ENCODE measurements at regions of chr12 and their contacts with region 1.

Region 1: GRCh38 chr12:124767066-124767821 is 96.4 kb downstream of the SCARB1 start:
- DNase-seq: peak; percentile 80 to 87
- ATAC-seq: peak; percentile 68 to 89 (median 83)
- H3K4me3 ChIP-seq: no peak overlapping the region
- H3K27ac ChIP-seq: peak overlapping the region in 7 of 10 donors; percentile 66 to 87 (median 81)
- H3K4me1 ChIP-seq: peaks cover 6 to 55% (median 38%) of the 10 kb centered on the region in 9 donors
- H3K27me3 ChIP-seq: peaks cover 0 to 4% (median 0%) of the 10 kb centered on the region in 7 donors
- CTCF ChIP-seq: peak; percentile 98 to 100 (median 100)

Region 2: DNA sequence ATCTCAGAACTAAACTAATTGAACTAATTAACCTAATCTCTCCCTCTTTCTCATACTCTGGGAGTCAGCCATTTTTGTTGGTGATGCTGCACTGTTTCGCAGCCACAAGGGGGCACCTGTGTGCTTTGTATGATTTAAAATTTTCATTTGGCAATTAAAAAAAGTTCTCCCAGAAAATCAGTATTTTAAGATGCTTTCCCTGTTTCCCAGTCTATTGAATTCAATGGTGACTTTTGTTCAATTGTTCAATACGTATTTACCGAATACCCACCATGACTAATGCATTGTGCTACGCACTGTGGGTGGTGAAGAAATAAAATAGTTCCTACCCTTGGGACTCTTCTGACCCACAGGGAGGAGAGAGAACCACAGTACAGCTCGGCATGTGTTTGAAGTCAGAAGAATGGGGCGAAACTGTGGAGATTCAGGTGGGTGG is 730.6 kb before region 1 on chr12:
- intact Hi-C with region 1: loop called in 9 of 10 experiments (anchors 1 to 5 kb)
- DNase-seq: peak; percentile 23 to 33
- ATAC-seq: peak in 4 of 8 donors; percentile 44 to 61 (median 54)
- H3K4me3 ChIP-seq: no peak overlapping the region
- H3K27ac ChIP-seq: no peak overlapping the region
- H3K4me1 ChIP-seq: peaks cover 0 to 19% (median 0%) of the 10 kb centered on the region in 9 donors
- H3K27me3 ChIP-seq: no peaks in the 10 kb centered on the region
- CTCF ChIP-seq: peak; percentile 86 to 97 (median 95)

Region 3: GRCh38 chr12:124347716-124348357 is 419.4 kb before region 1 on chr12:
- intact Hi-C with region 1: loop called in 5 of 10 experiments (anchors 5 to 10 kb)
- DNase-seq: no peak
- ATAC-seq: peak in 3 of 8 donors; percentile 4 to 25 (median 13)
- H3K4me3 ChIP-seq: no peak overlapping the region
- H3K27ac ChIP-seq: no peak overlapping the region
- H3K4me1 ChIP-seq: peaks cover 0 to 12% (median 7%) of the 10 kb centered on the region in 9 donors
- H3K27me3 ChIP-seq: no peaks in the 10 kb centered on the region
- CTCF ChIP-seq: peak; percentile 22 to 60 (median 52)

Region 4: DNA sequence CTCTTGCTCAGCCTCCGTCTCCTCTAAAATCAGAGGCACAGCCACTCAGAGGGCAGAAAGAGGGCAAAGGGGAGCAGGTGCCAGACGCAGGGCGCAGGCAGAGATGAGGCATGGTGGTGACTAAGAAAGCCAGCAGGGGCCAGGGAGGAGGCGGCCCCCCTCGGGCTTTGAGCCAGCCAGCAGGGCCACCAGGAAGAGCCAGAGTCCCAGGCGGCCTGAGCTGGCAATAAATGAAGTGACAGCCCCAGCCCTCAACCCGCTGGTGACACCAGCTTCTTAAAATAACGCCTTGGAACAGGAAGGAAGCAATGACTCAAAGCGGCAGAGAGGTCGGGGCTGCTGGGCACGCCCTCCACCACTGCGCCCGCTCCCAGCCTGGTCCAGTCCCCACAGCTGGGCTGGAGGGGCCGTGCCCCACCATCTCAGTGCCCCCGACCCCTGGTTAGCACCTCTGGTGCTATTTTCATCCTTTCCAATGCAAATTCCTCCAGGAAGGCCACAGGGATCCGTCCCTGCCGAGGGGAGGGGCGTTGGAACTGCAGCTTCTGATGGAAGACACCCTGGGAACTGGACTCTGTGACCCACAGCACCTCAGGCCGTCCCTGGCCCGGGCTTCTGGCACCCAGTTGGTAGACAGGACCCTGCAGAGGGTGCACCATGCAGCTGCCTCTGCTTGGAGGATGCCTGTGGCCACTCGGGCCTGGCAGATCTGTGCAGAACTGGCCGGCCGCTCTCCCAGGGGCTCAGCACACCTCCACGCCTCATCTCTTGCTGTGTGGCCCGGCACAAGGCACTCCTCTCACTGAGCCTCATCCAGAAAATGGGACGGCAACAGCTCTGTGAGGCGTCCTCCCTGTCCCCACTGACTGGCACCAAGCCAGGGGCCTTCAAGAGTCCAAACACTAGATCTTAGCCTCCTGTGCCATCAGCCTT is 313.6 kb before region 1 on chr12:
- intact Hi-C with region 1: loop called in 1 of 10 experiments (anchors 10 kb)
- DNase-seq: peak; percentile 90 to 93
- ATAC-seq: peak; percentile 76 to 88 (median 84)
- H3K4me3 ChIP-seq: peak overlapping the region in 6 of 10 donors; percentile 16 to 31 (median 25)
- H3K27ac ChIP-seq: peak overlapping the region; percentile 61 to 95 (median 88)
- H3K4me1 ChIP-seq: peaks cover 34 to 77% (median 72%) of the 10 kb centered on the region in 9 donors
- H3K27me3 ChIP-seq: no peaks in the 10 kb centered on the region
- CTCF ChIP-seq: peak in 4 of 9 donors; percentile 10 to 39 (median 29)

Region 5: GRCh38 chr12:124567661-124568373 is 199.4 kb before region 1 on chr12:
- intact Hi-C with region 1: loop called (anchors 2 to 10 kb)
- DNase-seq: peak; percentile 96 to 97
- ATAC-seq: peak; percentile 83 to 92 (median 88)
- H3K4me3 ChIP-seq: peak overlapping the region in 9 of 10 donors; percentile 24 to 99 (median 49)
- H3K27ac ChIP-seq: peak overlapping the region; percentile 44 to 95 (median 90)
- H3K4me1 ChIP-seq: peaks cover 19 to 57% (median 46%) of the 10 kb centered on the region in 9 donors
- H3K27me3 ChIP-seq: no peaks in the 10 kb centered on the region
- CTCF ChIP-seq: peak in 3 of 9 donors; percentile 25 to 32 (median 32)

Region 6: GRCh38 chr12:124694846-124695497 is 72.3 kb before region 1 on chr12:
- intact Hi-C with region 1: loop called in 1 of 10 experiments (anchors 5 kb)
- DNase-seq: peak; percentile 62 to 74
- ATAC-seq: peak; percentile 65 to 90 (median 76)
- H3K4me3 ChIP-seq: peak overlapping the region in 2 of 10 donors; percentile 2 to 3
- H3K27ac ChIP-seq: peak overlapping the region; percentile 50 to 88 (median 78)
- H3K4me1 ChIP-seq: peaks cover 0 to 58% (median 27%) of the 10 kb centered on the region in 9 donors
- H3K27me3 ChIP-seq: no peaks in the 10 kb centered on the region
- CTCF ChIP-seq: peak in 3 of 9 donors; percentile 12 to 36 (median 12)

Region 7: GRCh38 chr12:124727264-124727721 is 40.0 kb before region 1 on chr12:
- intact Hi-C with region 1: no loop called
- DNase-seq: peak; percentile 62 to 67
- ATAC-seq: peak; percentile 62 to 92 (median 84)
- H3K4me3 ChIP-seq: no peak overlapping the region
- H3K27ac ChIP-seq: peak overlapping the region in 9 of 10 donors; percentile 1 to 88 (median 64)
- H3K4me1 ChIP-seq: peaks cover 0 to 50% (median 17%) of the 10 kb centered on the region in 9 donors
- H3K27me3 ChIP-seq: no peaks in the 10 kb centered on the region
- CTCF ChIP-seq: no peak

Region 8: DNA sequence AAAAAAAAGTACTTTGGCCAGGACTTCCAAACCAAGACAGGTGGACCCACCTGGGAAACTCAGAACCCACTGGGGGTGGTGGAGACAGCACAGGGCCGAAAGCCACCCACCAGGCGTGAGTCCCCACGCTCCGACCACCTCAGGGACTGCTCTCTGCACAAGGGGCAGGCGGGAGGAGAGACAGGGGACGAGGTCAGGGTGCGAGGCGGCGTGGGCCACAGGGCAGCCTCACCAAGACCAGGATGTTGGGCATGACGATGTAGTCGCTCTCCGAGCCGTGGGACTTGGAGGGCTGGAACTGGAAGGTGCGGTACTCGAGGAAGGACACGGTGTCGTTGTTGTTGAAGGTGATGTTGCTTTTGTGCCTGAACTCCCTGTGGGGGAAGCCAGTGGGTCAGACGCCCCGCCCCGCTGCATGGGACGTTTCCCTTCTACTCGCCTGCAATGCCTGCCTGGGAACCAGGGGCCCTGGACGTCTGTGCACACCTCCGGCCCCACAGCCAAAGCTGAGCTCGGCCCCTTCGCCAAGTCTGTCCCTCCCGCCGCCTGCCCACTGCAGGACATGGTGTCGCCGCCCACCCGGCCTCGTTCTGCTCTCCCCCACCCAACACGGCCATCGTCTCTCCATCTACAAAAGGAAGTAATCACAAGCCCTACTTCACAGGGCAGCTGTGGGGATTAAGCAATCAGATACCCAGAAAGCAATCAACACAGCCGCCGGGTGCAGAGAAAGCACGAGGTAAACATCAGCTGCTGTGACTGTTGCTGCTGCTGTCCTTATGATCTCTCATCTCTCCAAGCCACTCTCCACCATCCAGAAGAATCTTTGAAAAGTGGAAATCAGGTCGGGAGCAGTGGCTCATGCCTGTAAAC is 47.7 kb after region 1 on chr12:
- intact Hi-C with region 1: no loop called
- DNase-seq: no peak
- ATAC-seq: peak in 3 of 8 donors; percentile 9 to 21 (median 14)
- H3K4me3 ChIP-seq: no peak overlapping the region
- H3K27ac ChIP-seq: no peak overlapping the region
- H3K4me1 ChIP-seq: no peaks in the 10 kb centered on the region
- H3K27me3 ChIP-seq: no peaks in the 10 kb centered on the region
- CTCF ChIP-seq: no peak

Region 9: GRCh38 chr12:124829008-124829707 is 61.9 kb after region 1 on chr12:
- intact Hi-C with region 1: no loop called
- DNase-seq: no peak
- ATAC-seq: no peak
- H3K4me3 ChIP-seq: no peak overlapping the region
- H3K27ac ChIP-seq: no peak overlapping the region
- H3K4me1 ChIP-seq: peaks cover 0 to 21% (median 10%) of the 10 kb centered on the region in 9 donors
- H3K27me3 ChIP-seq: no peaks in the 10 kb centered on the region
- CTCF ChIP-seq: no peak

Region 10: DNA sequence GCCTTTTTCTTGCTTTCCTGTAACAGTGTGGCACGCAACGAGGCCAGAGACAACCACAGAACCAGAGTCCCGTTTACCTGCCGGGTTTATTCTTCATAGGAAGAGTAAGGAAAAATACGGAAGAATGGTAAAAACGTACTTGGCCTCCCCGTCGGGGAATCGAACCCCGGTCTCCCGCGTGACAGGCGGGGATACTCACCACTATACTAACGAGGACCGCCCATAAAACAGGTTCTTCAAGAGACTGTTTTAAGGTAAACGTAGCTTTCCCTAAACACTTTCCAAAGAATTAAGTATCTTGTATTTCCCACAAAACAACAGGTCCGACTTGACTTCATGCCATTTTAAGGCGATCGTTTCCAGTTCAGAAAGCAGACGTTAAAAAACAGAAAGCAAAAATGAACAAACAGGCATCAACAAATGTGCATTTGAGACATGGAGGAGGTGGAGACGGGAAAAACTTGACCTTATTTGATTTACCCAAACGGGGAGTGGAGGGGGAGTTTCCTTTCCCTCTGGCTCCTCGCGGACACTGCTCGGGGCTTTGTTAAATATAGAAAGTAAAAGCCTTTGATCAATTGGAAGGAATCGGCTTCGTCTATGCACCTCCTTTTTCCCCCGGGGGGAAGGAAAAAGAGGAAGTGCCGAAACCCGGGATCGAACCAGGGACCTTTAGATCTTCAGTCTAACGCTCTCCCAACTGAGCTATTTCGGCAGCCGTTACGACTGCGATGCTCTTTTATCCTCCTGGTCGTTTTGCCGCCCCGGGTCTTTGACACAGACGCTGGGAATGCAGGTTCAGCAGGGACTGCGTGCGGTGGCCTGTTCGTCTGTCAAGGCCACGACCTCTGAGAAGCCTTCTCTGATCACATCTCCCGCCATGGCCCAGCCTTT is 160.2 kb after region 1 on chr12:
- intact Hi-C with region 1: no loop called
- DNase-seq: peak; percentile 87 to 93
- ATAC-seq: peak; percentile 88 to 97 (median 93)
- H3K4me3 ChIP-seq: peak overlapping the region; percentile 49 to 84 (median 70)
- H3K27ac ChIP-seq: peak overlapping the region; percentile 86 to 97 (median 92)
- H3K4me1 ChIP-seq: peaks cover 0 to 27% (median 8%) of the 10 kb centered on the region in 9 donors
- H3K27me3 ChIP-seq: no peaks in the 10 kb centered on the region
- CTCF ChIP-seq: no peak

Measured in heart right ventricle (tissue), 16 donors.